Transverse colon (tissue), 4 donors: ENCODE measurements at regions of chr18 and their contacts with region 1.

Region 1: DNA sequence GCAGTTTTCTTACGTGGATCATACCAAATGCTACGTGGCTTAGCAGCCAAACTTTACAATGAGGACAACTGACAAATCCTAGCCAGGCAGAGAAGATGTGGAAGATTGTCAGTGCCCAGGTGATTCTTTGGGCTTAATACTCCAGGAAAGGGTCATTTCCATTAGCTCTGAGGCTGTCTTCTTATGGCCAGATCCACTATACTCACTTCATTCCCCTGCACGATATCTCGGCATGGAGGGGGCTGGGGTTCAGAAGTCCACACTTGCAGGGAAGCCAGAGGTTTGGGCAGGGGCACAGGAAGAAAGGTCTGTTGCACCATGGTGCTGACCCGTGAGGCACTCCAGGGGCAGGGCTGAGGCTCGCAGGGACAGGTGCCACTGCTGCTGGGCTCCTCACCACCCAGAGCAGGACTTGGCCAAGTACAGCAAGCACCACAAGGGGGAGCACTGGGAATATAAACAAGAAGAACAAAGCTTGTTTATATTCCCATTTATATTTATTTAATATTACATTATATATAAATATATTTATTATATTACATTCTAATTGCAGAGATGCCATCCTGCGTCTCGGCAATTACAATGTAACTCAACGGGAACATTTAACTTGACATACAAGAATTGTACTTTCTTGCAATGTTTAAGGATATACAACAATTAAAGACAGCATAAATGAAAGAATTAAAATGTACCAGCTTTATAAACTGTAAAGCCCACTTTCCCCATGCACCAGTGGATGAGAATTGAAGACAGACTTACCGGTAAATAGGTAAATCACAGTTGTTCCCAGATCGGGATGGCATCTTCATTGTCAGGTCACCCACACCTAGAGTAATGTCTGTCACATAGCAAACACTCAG is 27.2 kb downstream of the CLUL1 start:
- DNase-seq: peak; percentile 72
- H3K4me3 ChIP-seq: no peak overlapping the region
- H3K27ac ChIP-seq: no peak overlapping the region
- H3K4me1 ChIP-seq: no peaks in the 10 kb centered on the region
- H3K27me3 ChIP-seq: no peaks in the 10 kb centered on the region
- CTCF ChIP-seq: peak; percentile 52 to 73 (median 67)
- EP300 ChIP-seq: no peak
- POLR2A ChIP-seq: no peak

Region 2: GRCh38 chr18:824179-824578 is 200.2 kb after region 1 on chr18:
- in situ Hi-C with region 1: loop called in 1 of 4 experiments (anchors 10 kb)
- intact Hi-C with region 1: no loop called
- DNase-seq: no peak
- H3K4me3 ChIP-seq: no peak overlapping the region
- H3K27ac ChIP-seq: no peak overlapping the region
- H3K4me1 ChIP-seq: no peaks in the 10 kb centered on the region
- H3K27me3 ChIP-seq: peaks cover 14% of the 10 kb centered on the region
- CTCF ChIP-seq: no peak
- EP300 ChIP-seq: no peak
- POLR2A ChIP-seq: no peak

Region 3: GRCh38 chr18:830315-830901 is 206.4 kb after region 1 on chr18:
- in situ Hi-C with region 1: loop called (anchors 5 to 10 kb)
- intact Hi-C with region 1: loop called (anchors 10 kb)
- DNase-seq: no peak
- H3K4me3 ChIP-seq: no peak overlapping the region
- H3K27ac ChIP-seq: no peak overlapping the region
- H3K4me1 ChIP-seq: peaks cover 0 to 7% (median 1%) of the 10 kb centered on the region in 4 donors
- H3K27me3 ChIP-seq: no peaks in the 10 kb centered on the region
- CTCF ChIP-seq: no peak
- EP300 ChIP-seq: no peak
- POLR2A ChIP-seq: no peak

Region 4: GRCh38 chr18:839224-840022 is 215.4 kb after region 1 on chr18:
- in situ Hi-C with region 1: loop called in 3 of 4 experiments (anchors 5 to 10 kb)
- intact Hi-C with region 1: loop called (anchors 10 kb)
- DNase-seq: peak; percentile 89
- H3K4me3 ChIP-seq: no peak overlapping the region
- H3K27ac ChIP-seq: no peak overlapping the region
- H3K4me1 ChIP-seq: peaks cover 0 to 3% (median 0%) of the 10 kb centered on the region in 4 donors
- H3K27me3 ChIP-seq: no peaks in the 10 kb centered on the region
- CTCF ChIP-seq: peak; percentile 86 to 99 (median 98)
- EP300 ChIP-seq: no peak
- POLR2A ChIP-seq: no peak